Endothelial cell of umbilical vein (primary cell): ENCODE measurements at regions of chr18 and their contacts with region 1.

Region 1: DNA sequence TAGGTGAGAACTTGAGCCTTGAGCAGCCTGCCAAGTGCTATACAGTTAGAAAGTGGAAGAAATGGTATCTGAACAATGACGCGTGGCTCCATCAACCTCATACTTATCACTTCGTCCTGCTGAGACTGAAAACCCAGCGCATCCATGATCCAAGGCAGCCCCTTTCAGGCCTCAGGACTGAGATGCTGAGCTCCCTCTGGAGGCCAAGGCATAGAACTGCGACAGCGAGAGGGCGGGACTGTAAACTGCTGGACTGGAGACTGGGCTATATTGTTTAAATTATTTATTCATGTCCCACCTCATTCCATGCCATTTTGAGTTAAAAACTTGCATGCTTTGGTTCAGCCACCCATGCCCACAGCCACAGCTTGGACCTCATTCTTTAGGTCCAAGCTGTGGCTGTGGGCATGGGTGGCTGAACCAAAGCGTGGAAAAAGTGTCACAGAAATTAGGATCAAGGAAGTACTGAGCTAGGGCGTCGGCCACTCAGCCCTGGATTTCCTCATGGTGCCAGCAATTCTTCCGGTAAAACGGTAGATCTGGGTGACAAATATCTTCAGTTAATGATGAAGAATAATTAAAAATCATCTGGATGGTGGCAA is 195.5 kb downstream of the L3MBTL4 start:
- DNase-seq: peak; percentile 52
- H3K4me3 ChIP-seq: no peak overlapping the region
- H3K27ac ChIP-seq: no peak overlapping the region
- H3K4me1 ChIP-seq: no peaks in the 10 kb centered on the region
- H3K27me3 ChIP-seq: no peaks in the 10 kb centered on the region
- CTCF ChIP-seq: peak; percentile 80 to 88
- POLR2A ChIP-seq: no peak

Region 2: DNA sequence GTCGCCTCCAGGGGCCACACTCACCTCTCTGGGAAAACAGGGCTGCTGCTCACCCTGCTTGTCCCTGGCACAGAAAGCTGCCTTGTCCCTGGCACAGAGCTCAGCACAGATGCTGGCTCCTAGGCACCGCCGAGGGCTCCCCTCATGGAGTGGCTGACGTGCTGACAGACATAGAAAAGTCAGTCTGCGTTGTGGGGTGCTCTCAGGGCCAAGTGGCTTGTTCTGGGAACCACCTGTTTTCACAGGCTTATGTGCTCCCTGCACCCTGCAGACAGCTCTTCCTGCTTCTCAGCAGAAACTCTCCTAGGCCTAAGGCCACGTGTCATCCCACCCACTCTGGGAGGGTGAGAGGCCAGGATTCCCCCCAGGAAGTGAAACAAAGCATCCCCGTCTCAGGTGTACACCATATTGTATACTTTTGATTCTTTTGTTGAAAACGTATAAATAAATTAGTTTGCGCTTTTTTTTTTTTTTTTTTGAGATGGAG is 239.2 kb before region 1 on chr18:
- CTCF ChIA-PET with region 1: no interaction called
- POLR2A ChIA-PET with region 1: no interaction called
- dilution Hi-C with region 1: no loop called
- intact Hi-C with region 1: loop called (anchors 10 kb)
- DNase-seq: no peak
- H3K4me3 ChIP-seq: no peak overlapping the region
- H3K27ac ChIP-seq: no peak overlapping the region
- H3K4me1 ChIP-seq: no peaks in the 10 kb centered on the region
- H3K27me3 ChIP-seq: no peaks in the 10 kb centered on the region
- CTCF ChIP-seq: no peak
- POLR2A ChIP-seq: no peak

Region 3: DNA sequence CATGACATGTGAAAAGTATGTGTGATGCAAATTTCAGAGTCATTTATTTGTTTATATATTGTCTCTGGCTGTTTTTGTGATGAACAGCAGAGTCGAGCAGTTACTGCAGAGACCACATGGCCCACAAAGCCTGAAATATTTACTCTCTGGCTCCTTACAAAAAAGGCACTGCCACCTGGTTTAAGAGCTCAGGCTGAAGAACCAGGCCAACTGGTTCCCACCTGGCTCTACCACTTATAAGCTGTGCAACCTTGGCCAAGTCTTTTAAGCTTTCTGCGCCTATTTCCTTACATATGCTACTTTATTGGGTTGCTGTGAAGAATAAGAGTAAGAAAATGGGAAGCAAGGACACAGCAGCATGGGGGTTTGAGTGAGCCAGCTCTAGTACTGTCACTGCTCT is 12.1 kb before region 1 on chr18:
- CTCF ChIA-PET with region 1: interaction called, 14 read pairs
- POLR2A ChIA-PET with region 1: no interaction called
- dilution Hi-C with region 1: no loop called
- intact Hi-C with region 1: no loop called
- DNase-seq: no peak
- H3K4me3 ChIP-seq: no peak overlapping the region
- H3K27ac ChIP-seq: no peak overlapping the region
- H3K4me1 ChIP-seq: no peaks in the 10 kb centered on the region
- H3K27me3 ChIP-seq: no peaks in the 10 kb centered on the region
- CTCF ChIP-seq: no peak
- POLR2A ChIP-seq: no peak

Region 4: DNA sequence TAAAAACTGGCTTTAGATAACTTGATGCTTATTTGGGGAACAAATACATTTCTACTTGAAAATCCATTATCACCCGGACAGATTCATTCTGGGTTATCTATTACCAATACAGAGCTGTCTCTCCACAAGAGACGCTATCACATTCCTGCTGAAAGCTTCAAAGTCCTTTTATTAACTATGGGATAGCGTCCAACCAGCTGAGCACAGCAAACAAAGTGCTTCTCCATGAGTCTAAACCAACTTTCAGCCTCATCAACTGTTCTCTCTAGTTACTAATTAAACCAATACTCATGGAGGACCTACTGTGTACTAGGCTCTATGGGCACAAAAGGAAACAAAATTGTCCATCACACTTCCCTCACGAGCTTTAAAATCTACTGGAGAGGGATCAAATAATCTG is 62.7 kb after region 1 on chr18:
- CTCF ChIA-PET with region 1: no interaction called
- POLR2A ChIA-PET with region 1: no interaction called
- dilution Hi-C with region 1: no loop called
- intact Hi-C with region 1: loop called (anchors 10 kb)
- DNase-seq: no peak
- H3K4me3 ChIP-seq: no peak overlapping the region
- H3K27ac ChIP-seq: no peak overlapping the region
- H3K4me1 ChIP-seq: no peaks in the 10 kb centered on the region
- H3K27me3 ChIP-seq: no peaks in the 10 kb centered on the region
- CTCF ChIP-seq: no peak
- POLR2A ChIP-seq: no peak